ENCODE measurements at regions of chr4 and their contacts with region 1.

Region 1: GRCh38 chr4:137124278-137124932 is 407.9 kb downstream of the PCDH18 start:
- DNase-seq: peak; percentile 79
- ATAC-seq: peak; percentile 100
- H3K4me3 ChIP-seq: peak overlapping the region; percentile 44; the same call in 1 of the 2 replicates
- H3K27ac ChIP-seq: no peak overlapping the region
- H3K4me1 ChIP-seq: no peaks in the 10 kb centered on the region
- H3K27me3 ChIP-seq: no peaks in the 10 kb centered on the region
- CTCF ChIP-seq: peak; percentile 79
- POLR2A ChIP-seq: no peak
- RAD21 ChIP-seq: peak; percentile 88

Region 2: GRCh38 chr4:136810626-136811025 is 313.8 kb before region 1 on chr4:
- CTCF ChIA-PET with region 1: no interaction called
- POLR2A ChIA-PET with region 1: no interaction called
- dilution Hi-C with region 1: no loop called
- in situ Hi-C with region 1: no loop called
- intact Hi-C with region 1: no loop called
- DNase-seq: peak; percentile 11
- ATAC-seq: no peak
- H3K4me3 ChIP-seq: no peak overlapping the region
- H3K27ac ChIP-seq: no peak overlapping the region
- H3K4me1 ChIP-seq: no peaks in the 10 kb centered on the region
- H3K27me3 ChIP-seq: no peaks in the 10 kb centered on the region
- CTCF ChIP-seq: no peak
- POLR2A ChIP-seq: no peak
- RAD21 ChIP-seq: no peak

Region 3: GRCh38 chr4:137283737-137284136 is 159.3 kb after region 1 on chr4:
- CTCF ChIA-PET with region 1: no interaction called
- POLR2A ChIA-PET with region 1: no interaction called
- dilution Hi-C with region 1: no loop called
- in situ Hi-C with region 1: no loop called
- intact Hi-C with region 1: loop called (anchors 5 kb)
- DNase-seq: peak; percentile 39
- ATAC-seq: peak; percentile 63; the same call in 1 of the 2 replicates
- H3K4me3 ChIP-seq: no peak overlapping the region
- H3K27ac ChIP-seq: no peak overlapping the region
- H3K4me1 ChIP-seq: no peaks in the 10 kb centered on the region
- H3K27me3 ChIP-seq: no peaks in the 10 kb centered on the region
- CTCF ChIP-seq: peak; percentile 56
- POLR2A ChIP-seq: no peak
- RAD21 ChIP-seq: peak; percentile 55

Region 4: DNA sequence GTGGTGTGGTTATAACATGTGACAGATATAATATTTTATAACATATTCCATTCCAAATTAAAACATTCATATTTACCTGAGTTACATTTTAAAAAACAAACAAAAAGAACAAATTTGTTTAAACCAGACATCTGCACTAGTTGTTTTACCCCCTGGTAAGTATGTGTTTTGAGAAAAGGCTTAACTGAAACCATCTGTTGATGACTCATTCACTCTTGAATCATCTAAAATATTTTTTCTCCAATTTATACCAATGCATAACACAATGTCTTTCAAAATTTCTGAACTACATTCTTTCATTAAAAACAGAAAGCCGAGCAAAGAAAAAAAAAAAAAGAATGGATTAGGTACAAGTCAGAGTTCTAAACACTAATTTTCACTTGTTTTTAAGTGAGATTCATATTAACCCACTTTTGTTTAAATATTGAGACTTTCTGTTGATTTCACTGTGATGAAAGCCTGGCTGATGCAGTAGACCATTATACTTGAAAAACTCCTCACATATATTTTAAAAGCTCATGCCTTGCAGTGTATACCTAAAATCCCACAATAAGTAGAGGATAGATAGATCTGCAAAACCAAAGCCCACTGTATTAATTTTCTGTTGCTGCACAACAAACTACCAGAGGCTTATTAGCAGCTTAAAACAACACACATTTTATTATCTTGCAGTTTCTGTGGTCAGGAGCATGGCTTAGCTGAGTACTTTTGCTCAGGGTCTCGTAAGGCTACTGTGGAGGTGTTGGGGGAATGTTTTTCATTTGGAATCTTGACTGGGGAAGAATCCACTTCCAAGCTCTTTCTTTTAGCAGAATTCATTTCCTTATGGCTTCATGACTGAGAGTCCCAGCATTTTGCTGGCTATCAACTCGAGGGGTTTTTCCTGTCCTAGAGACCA is 186.4 kb after region 1 on chr4:
- CTCF ChIA-PET with region 1: no interaction called
- POLR2A ChIA-PET with region 1: no interaction called
- dilution Hi-C with region 1: no loop called
- in situ Hi-C with region 1: no loop called
- intact Hi-C with region 1: no loop called
- DNase-seq: peak; percentile 91
- ATAC-seq: peak; percentile 72
- H3K4me3 ChIP-seq: no peak overlapping the region
- H3K27ac ChIP-seq: peak overlapping the region; percentile 98
- H3K4me1 ChIP-seq: peaks cover 10% of the 10 kb centered on the region
- H3K27me3 ChIP-seq: no peaks in the 10 kb centered on the region
- CTCF ChIP-seq: no peak
- POLR2A ChIP-seq: no peak
- RAD21 ChIP-seq: no peak

Region 5: DNA sequence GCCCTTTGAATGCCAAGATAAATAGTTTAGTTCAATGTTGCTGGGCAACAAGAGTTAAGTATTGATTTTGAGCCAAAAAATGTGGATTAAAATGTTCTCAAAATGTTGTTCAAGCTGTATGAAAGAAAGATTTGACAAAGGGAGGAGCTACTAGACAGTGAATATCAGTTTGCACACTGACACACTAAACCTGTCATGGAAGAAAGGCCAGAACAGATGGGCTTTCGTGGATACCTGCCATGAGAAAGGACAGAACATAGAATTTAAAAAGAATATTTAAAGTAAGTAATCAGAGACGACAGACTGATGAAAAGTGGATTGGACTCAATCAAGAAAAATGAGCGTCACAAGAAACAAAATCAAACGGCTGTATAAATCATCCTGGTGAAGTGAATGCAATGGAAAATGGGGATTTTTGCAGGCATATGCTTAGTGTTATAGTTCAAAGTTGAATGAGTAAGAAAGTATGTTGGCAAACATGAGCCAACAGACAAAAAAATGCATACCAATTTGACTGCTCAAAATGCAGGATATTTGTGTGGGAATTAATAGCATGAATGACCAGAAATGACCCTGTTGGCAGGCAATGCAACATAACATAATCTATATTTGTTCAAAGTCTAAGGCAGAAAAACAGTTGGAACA is 400.4 kb after region 1 on chr4:
- CTCF ChIA-PET with region 1: interaction called, 4 read pairs
- POLR2A ChIA-PET with region 1: interaction called, 6 read pairs
- dilution Hi-C with region 1: no loop called
- in situ Hi-C with region 1: loop called (anchors 10 kb)
- intact Hi-C with region 1: no loop called
- DNase-seq: peak; percentile 37
- ATAC-seq: peak; percentile 15; the same call in 1 of the 2 replicates
- H3K4me3 ChIP-seq: no peak overlapping the region
- H3K27ac ChIP-seq: peak overlapping the region; percentile 3; the same call in 1 of the 2 replicates
- H3K4me1 ChIP-seq: peaks cover 3% of the 10 kb centered on the region; the same call in 1 of the 2 replicates
- H3K27me3 ChIP-seq: no peaks in the 10 kb centered on the region
- CTCF ChIP-seq: no peak
- POLR2A ChIP-seq: no peak
- RAD21 ChIP-seq: no peak

Region 6: GRCh38 chr4:137861682-137862081 is 737.3 kb after region 1 on chr4:
- CTCF ChIA-PET with region 1: interaction called, 3 read pairs
- POLR2A ChIA-PET with region 1: no interaction called
- dilution Hi-C with region 1: no loop called
- in situ Hi-C with region 1: loop called (anchors 25 kb)
- intact Hi-C with region 1: loop called (anchors 1 kb)
- DNase-seq: peak; percentile 29
- ATAC-seq: 0 out of 2 replicates have a peak, but pooled peaks have one; percentile 37
- H3K4me3 ChIP-seq: no peak overlapping the region
- H3K27ac ChIP-seq: no peak overlapping the region
- H3K4me1 ChIP-seq: peaks cover 4% of the 10 kb centered on the region
- H3K27me3 ChIP-seq: no peaks in the 10 kb centered on the region
- CTCF ChIP-seq: peak; percentile 62
- POLR2A ChIP-seq: no peak
- RAD21 ChIP-seq: peak; percentile 61

Region 7: GRCh38 chr4:138090150-138090917 is 965.9 kb after region 1 on chr4:
- CTCF ChIA-PET with region 1: interaction called, 7 read pairs
- POLR2A ChIA-PET with region 1: no interaction called
- dilution Hi-C with region 1: no loop called
- in situ Hi-C with region 1: no loop called
- intact Hi-C with region 1: loop called (anchors 1 kb)
- DNase-seq: peak; percentile 83
- ATAC-seq: peak; percentile 96
- H3K4me3 ChIP-seq: peak overlapping the region; percentile 34
- H3K27ac ChIP-seq: peak overlapping the region; percentile 57
- H3K4me1 ChIP-seq: 0 out of 2 replicates have a peak, but pooled peaks cover 2% of the 10 kb centered on the region
- H3K27me3 ChIP-seq: no peaks in the 10 kb centered on the region
- CTCF ChIP-seq: peak; percentile 87
- POLR2A ChIP-seq: no peak
- RAD21 ChIP-seq: peak; percentile 93

Region 8: DNA sequence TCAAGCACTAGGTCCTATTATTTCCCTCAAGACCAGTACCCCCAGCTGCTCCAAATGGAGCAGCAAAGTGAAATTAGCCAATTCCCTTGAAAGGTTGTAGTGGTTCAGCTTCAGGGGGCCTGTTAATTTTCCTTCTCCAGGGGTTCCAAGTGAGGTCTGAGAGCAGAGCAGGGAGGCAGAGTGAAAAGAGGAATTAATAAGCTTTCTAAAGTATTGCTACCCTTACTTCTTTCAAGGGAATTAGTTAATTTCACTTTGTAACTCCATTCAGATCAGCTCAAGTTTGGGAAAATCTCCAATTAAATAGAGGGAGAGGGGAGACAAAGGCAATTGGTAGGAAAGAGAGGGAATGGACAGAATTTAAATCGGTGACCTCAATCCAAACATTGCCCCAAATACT is 1196.4 kb after region 1 on chr4:
- CTCF ChIA-PET with region 1: no interaction called
- POLR2A ChIA-PET with region 1: no interaction called
- dilution Hi-C with region 1: no loop called
- in situ Hi-C with region 1: no loop called
- intact Hi-C with region 1: no loop called
- DNase-seq: no peak
- ATAC-seq: no peak
- H3K4me3 ChIP-seq: no peak overlapping the region
- H3K27ac ChIP-seq: no peak overlapping the region
- H3K4me1 ChIP-seq: no peaks in the 10 kb centered on the region
- H3K27me3 ChIP-seq: no peaks in the 10 kb centered on the region
- CTCF ChIP-seq: no peak
- POLR2A ChIP-seq: no peak
- RAD21 ChIP-seq: no peak

Region 9: DNA sequence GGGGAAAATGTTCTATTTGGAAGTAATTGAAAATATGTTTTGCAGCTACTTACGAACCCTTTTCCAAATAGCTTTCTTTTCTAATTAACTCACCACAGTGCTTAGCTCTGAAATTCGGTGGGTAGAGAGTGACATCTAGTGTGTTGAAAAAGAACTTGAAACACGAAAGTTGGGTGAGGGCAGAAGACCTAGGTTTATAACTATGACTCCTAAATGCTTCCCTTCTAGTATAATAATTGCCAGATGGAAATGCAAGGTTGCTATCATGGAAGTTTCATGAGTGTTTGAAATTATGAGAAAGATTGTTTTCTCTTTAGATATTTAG is 1813.9 kb after region 1 on chr4:
- CTCF ChIA-PET with region 1: no interaction called
- POLR2A ChIA-PET with region 1: no interaction called
- dilution Hi-C with region 1: no loop called
- in situ Hi-C with region 1: no loop called
- intact Hi-C with region 1: loop called (anchors 10 kb)
- DNase-seq: peak; percentile 65
- ATAC-seq: peak; percentile 96
- H3K4me3 ChIP-seq: no peak overlapping the region
- H3K27ac ChIP-seq: no peak overlapping the region
- H3K4me1 ChIP-seq: no peaks in the 10 kb centered on the region
- H3K27me3 ChIP-seq: no peaks in the 10 kb centered on the region
- CTCF ChIP-seq: peak; percentile 61
- POLR2A ChIP-seq: no peak
- RAD21 ChIP-seq: peak; percentile 81